Astrocyte of the cerebellum (primary cell): ENCODE measurements at regions of chrX and their contacts with region 1.

Region 1: GRCh38 chrX:43969504-43970501 is 3.4 kb downstream of the NDP start:
- DNase-seq: no peak
- H3K4me3 ChIP-seq: no peak overlapping the region
- CTCF ChIP-seq: no peak

Region 2: GRCh38 chrX:44003975-44004374 is 34.2 kb after region 1 on chrX:
- in situ Hi-C with region 1: no loop called
- DNase-seq: no peak
- H3K4me3 ChIP-seq: no peak overlapping the region
- CTCF ChIP-seq: no peak

Region 3: GRCh38 chrX:44017676-44018075 is 47.9 kb after region 1 on chrX:
- in situ Hi-C with region 1: no loop called
- DNase-seq: no peak
- H3K4me3 ChIP-seq: no peak overlapping the region
- CTCF ChIP-seq: no peak

Region 4: DNA sequence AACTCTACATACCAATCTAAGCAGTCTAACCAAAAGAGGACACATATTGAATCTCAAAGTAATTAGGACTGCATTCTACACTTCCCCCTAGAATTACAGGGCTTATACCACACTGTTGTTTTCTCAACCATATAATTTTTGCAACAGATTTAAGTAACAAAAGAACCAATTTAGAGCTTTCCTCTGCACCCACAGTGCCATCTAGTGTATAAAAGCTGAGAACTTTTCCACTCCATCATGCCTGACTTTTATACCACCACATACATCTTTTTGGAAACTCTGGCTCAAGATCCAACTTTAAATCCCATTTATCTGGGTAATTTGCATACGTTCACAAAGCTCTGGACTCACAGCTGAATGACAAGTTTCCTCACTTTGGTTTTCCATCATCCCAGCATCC is 274.2 kb after region 1 on chrX:
- in situ Hi-C with region 1: loop called (anchors 10 kb)
- DNase-seq: peak; percentile 22
- H3K4me3 ChIP-seq: no peak overlapping the region
- CTCF ChIP-seq: peak; percentile 54